Dorsolateral prefrontal cortex (tissue), 120 donors: ENCODE measurements at regions of chr1 and their contacts with region 1.

Region 1: DNA sequence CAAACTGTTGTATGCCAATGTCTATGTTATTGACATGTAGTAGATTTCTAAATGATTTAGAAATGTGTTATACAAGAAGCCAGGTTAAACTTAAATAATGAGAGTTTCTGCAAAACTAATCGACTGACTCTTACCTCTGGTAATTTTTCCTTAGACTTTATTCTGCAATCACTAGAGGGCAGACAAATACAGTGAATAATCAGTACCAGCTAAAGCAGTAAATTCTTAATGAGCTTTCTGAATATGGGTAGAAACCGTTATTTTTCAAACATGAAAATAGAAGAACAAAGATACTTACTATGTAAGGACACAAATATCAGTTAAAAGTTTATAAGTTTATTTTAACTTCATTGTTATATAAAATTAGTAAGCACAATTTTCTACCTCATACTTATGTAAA is 97.9 kb upstream of the RGS1 start:
- DNase-seq: no peak
- H3K4me3 ChIP-seq: no peak overlapping the region
- H3K27ac ChIP-seq: no peak overlapping the region
- H3K27me3 ChIP-seq: peaks cover 0 to 6% (median 0%) of the 10 kb centered on the region in 45 donors
- CTCF ChIP-seq: peak in 55 of 56 donors; percentile 38 to 86 (median 63)

Region 2: GRCh38 chr1:192530254-192530653 is 52.6 kb after region 1 on chr1:
- intact Hi-C with region 1: no loop called
- DNase-seq: no peak
- H3K4me3 ChIP-seq: no peak overlapping the region
- H3K27ac ChIP-seq: peak overlapping the region in 48 of 59 donors; percentile 4 to 90 (median 58)
- H3K27me3 ChIP-seq: no peaks in the 10 kb centered on the region
- CTCF ChIP-seq: no peak

Region 3: DNA sequence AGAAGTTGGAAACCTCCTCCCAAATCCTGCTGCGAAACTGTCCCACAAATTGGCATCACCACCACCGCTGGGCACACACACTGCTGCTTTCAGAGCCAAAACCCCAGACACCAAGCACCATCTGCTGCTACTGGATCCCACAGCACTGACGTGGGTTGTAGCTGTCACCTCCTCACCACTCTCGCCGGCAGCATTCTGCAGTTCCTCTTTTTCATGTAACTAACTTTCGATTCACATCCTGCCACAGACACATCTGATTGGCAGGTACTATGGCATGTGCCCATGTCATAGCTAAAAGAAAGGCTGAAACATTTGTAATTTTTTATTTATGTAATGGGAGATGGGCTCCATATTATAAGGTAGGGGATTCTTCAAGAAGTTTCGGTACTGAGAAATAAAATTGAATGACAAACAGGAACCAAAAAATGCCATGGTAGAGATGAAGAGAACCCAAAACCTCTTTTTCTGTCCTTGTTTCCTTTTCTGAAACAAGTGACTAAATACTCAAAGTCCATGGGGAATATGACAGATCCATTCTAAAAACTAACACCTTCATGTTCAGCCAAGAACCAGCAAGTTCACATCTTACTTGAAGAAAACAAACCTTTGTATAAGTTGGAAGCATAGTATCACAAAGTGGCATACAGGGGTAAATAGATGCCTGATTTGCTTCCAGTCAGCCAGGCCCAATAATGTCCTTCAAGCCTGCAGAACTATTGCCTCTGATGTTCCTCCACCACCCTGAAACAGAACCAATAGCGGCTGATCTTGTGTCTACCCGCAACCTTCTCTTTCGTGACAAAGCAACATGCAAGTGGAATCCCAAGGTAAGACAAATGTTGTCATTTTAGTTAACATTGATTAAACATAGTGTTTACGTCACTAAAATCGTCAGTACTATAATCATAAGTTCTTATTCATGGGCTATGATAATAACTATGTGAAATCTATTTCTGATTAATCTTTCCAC is 131.8 kb after region 1 on chr1:
- intact Hi-C with region 1: loop called (anchors 5 kb)
- DNase-seq: peak in 8 of 10 donors; percentile 18 to 52 (median 34)
- H3K4me3 ChIP-seq: no peak overlapping the region
- H3K27ac ChIP-seq: peak overlapping the region in 1 of 59 donors; percentile 9
- H3K27me3 ChIP-seq: no peaks in the 10 kb centered on the region
- CTCF ChIP-seq: no peak

Region 4: GRCh38 chr1:192808518-192809306 is 331.1 kb after region 1 on chr1 and contains the start of gene RGS2:
- intact Hi-C with region 1: loop called in 1 of 2 experiments (anchors 10 kb)
- DNase-seq: peak; percentile 87 to 97 (median 95)
- H3K4me3 ChIP-seq: peak within 1 kb of the TSS; percentile 64 to 96 (median 81)
- H3K27ac ChIP-seq: peak within 1 kb of the TSS; percentile 72 to 98 (median 92)
- H3K27me3 ChIP-seq: no peaks in the 10 kb centered on the region
- CTCF ChIP-seq: peak in 43 of 56 donors; percentile 7 to 70 (median 45)
- total RNA-seq, gene RGS2: 11.3 to 144 (median 30.8) TPM

Region 5: GRCh38 chr1:193019442-193020026 is 541.9 kb after region 1 on chr1:
- intact Hi-C with region 1: loop called in 1 of 2 experiments (anchors 10 kb)
- DNase-seq: no peak
- H3K4me3 ChIP-seq: no peak overlapping the region
- H3K27ac ChIP-seq: no peak overlapping the region
- H3K27me3 ChIP-seq: no peaks in the 10 kb centered on the region
- CTCF ChIP-seq: peak; percentile 47 to 84 (median 66)